Left lung (tissue), 14 donors: ENCODE measurements at regions of chr1 and their contacts with region 1.

Region 1: GRCh38 chr1:85580872-85581801 is 576 bp downstream of the CCN1 start:
- DNase-seq: peak; percentile 67 to 92 (median 78)
- ATAC-seq: peak; percentile 67
- H3K4me3 ChIP-seq: peak overlapping the region; percentile 56 to 73
- H3K27ac ChIP-seq: peak overlapping the region; percentile 91 to 97
- H3K4me1 ChIP-seq: peaks cover 8 to 65% of the 10 kb centered on the region in 2 donors
- H3K27me3 ChIP-seq: peaks cover 0 to 60% of the 10 kb centered on the region in 2 donors
- CTCF ChIP-seq: peak; percentile 49 to 64

Region 2: GRCh38 chr1:85307987-85308832 is 272.9 kb before region 1 on chr1:
- intact Hi-C with region 1: loop called in 1 of 2 experiments (anchors 10 kb)
- DNase-seq: peak; percentile 83 to 93 (median 90)
- ATAC-seq: peak; percentile 100
- H3K4me3 ChIP-seq: no peak overlapping the region
- H3K27ac ChIP-seq: no peak overlapping the region
- H3K4me1 ChIP-seq: peaks cover 3 to 7% of the 10 kb centered on the region in 2 donors
- H3K27me3 ChIP-seq: peaks cover 0 to 17% of the 10 kb centered on the region in 2 donors
- CTCF ChIP-seq: peak; percentile 87 to 96

Region 3: DNA sequence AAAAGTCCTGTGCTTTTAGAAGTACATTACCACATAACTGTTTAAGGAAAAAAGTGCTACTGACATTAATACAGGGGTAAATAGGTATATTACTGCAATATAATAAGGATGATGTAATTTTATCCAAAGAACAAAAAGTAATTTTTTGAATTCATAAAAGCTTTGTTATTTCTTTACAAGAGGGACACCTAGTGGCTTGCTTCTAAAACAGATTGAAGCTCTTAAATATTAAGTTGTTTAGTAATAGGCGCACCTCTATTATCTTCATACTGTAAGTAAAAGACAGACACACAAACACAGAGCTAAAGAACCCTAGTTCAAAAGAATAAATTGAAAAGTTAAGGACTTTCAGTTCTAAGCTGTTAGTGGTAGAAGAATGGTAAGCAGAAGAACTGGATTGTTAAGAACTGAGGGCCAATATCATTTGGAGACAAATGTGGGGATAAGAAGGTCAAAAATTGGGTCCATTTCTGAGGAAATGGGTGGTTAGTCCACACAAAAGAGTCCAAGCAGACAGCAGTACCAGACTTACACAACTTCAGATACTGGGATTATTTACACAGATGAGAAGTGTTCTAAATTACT is 111.7 kb after region 1 on chr1:
- intact Hi-C with region 1: loop called in 1 of 2 experiments (anchors 10 kb)
- DNase-seq: peak in 1 of 4 donors; percentile 44
- ATAC-seq: peak; percentile 58
- H3K4me3 ChIP-seq: no peak overlapping the region
- H3K27ac ChIP-seq: no peak overlapping the region
- H3K4me1 ChIP-seq: no peaks in the 10 kb centered on the region
- H3K27me3 ChIP-seq: no peaks in the 10 kb centered on the region
- CTCF ChIP-seq: peak in 1 of 2 donors; percentile 48